AG04450 (cell line): ENCODE measurements at regions of chr2 and their contacts with region 1.

Region 1: DNA sequence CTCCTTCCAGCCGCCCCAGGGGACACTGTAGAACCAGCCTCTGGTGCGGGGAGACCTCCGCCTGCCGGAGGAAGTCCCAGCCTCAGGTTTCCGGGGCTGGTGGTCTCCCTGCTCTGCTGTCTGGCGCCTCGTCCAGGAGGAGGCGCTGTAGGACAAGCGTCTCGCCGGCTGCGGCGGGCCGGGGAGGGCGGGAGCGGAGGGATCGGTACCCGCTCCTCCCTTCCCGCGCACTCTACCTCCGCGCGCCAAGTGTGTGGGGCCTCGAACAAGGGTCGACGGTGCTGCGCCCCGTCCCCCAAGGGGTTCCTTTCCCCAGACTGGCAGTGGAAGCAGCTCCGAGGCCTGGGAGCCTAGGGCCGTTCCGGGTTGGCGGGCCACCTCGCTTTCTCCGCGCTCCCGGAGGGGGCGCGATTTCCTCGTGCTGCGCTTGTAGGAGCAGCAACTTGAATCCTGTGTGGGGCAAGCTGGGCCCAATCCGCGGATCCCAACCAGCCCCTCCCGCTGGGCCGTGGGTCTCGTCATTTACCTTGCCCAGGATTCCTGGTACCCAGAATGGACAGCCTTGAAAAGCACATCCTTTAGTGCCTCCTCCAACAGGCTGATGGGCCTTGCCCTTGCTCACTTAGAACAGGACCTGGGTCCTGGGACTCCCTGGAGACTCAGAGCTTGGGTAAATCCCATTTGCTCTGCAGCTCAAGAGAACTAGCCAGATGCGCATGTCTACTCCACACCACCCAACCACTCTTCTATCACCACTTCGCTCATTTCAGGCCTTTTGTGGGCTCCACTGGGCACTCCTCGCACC is 10.6 kb upstream of the HOXD4 start:
- DNase-seq: peak; percentile 4
- H3K4me3 ChIP-seq: peak overlapping the region; percentile 58
- H3K27ac ChIP-seq: no peak overlapping the region
- H3K27me3 ChIP-seq: peaks cover 78% of the 10 kb centered on the region
- CTCF ChIP-seq: peak; percentile 73

Region 2: DNA sequence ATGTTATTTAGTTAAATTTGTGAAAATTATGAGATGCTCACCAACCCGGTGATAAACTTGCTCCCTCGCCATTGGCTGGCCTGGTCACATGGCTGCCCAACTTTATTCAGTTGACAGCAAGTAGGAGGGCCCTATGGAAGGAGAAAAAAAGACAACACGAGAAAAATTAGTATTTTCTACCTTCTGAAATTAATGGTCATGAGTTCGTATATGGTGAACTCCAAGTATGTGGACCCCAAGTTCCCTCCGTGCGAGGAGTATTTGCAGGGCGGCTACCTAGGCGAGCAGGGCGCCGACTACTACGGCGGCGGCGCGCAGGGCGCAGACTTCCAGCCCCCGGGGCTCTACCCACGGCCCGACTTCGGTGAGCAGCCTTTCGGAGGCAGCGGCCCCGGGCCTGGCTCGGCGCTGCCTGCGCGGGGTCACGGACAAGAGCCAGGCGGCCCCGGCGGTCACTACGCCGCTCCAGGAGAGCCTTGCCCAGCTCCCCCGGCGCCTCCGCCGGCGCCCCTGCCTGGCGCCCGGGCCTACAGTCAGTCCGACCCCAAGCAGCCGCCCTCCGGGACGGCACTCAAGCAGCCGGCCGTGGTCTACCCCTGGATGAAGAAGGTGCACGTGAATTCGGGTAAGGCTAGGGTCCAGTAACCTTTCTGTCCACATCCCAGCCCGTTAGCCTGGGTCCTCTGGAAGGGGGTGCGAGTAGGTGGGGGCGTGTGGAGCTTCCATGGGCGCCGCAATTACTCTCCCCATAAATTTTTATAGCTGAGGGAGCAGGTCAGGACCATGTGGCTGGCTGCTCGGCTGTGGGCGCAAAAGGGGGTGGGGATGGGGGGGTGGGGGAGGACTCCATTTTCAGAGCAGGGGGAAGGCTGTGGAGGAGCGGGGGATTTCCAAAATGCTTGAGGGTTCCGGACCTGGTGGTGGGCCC is 11.0 kb after region 1 on chr2 and contains the start of gene HOXD4:
- CTCF ChIA-PET with region 1: interaction called, 11 read pairs
- POLR2A ChIA-PET with region 1: no interaction called
- DNase-seq: no peak
- H3K4me3 ChIP-seq: no peak within 1 kb of the TSS
- H3K27ac ChIP-seq: no peak within 1 kb of the TSS
- H3K27me3 ChIP-seq: peaks cover 94% of the 10 kb centered on the region
- CTCF ChIP-seq: no peak
- polyA plus RNA-seq, gene HOXD4: not detected in 2 replicates

Region 3: GRCh38 chr2:176445956-176446355 is 305.2 kb after region 1 on chr2:
- CTCF ChIA-PET with region 1: interaction called, 114 read pairs
- POLR2A ChIA-PET with region 1: no interaction called
- DNase-seq: peak; percentile 44
- H3K4me3 ChIP-seq: no peak overlapping the region
- H3K27ac ChIP-seq: no peak overlapping the region
- H3K27me3 ChIP-seq: no peaks in the 10 kb centered on the region
- CTCF ChIP-seq: peak; percentile 30

Region 4: DNA sequence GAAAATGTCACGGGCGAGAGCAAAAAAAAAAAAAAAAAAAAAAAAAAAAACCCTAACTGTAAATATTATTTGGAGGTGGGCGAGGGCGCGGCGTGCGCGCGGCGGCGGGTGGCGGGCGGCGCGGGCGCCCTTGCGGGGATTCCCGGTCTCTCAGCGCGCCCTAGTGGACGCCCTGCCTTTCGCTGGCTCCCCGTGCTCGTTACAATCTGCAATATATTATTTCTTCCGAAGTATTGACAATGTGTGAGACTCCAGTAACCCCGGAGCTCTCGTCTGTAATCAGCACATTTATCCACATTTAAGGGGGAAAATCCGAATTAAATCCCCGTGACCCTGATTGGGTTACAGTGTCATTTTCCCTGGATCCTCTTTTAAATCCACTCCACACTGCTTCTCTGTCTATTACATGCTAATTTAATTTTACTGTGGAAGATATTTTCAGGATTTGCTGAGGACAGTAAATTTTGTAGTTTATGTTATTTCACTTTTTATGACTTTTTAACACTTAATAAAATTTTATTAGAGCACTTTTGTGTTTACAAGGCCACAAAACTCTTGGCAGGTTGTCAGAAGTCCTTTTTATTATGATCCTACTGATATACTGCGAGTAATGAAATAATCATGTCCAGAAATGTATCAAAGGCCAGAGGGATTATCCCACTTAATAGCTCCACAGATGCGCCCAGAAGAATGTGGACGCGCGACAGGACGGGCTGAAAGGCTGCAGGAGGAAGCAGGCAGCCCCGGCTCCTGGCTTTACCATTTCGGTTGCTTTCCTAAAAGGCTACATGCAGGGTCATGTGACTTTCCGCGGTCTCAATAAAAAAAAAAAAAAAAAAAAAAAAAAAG is 497.7 kb after region 1 on chr2:
- CTCF ChIA-PET with region 1: interaction called, 89 read pairs
- POLR2A ChIA-PET with region 1: no interaction called
- DNase-seq: peak; percentile 6
- H3K4me3 ChIP-seq: peak overlapping the region; percentile 63
- H3K27ac ChIP-seq: no peak overlapping the region
- H3K27me3 ChIP-seq: peaks cover 4% of the 10 kb centered on the region
- CTCF ChIP-seq: peak; percentile 69

Region 5: DNA sequence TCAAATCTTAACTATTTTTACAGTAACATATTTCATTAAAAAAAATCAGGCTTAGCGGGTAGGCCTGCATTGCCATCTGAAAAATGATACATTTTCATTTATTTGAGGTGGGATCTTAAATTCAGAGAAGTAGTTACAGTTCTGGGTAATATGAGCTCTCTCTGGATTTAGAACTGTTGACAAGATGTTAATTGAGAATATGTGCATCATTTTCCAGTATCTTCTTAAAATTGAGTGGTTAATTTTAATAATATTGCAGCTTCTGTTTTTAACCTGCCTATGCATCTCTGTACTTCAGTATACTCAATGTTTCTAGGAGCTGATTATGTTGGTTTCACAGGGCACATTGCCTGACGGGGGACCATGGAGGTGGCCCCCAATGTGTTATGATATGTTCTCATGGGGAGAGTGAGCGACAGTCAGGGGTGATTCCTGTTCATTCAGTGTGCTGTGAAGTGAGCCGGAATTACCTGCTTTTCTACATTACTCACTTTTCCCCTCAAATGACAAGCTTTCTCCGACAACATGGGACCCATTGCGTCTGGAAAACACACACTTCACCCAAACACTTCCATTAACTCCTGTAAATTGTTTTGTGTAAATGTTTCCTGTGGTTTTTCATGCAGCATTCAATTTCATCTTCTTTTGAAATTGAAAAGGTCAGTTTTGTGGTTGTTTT is 534.7 kb after region 1 on chr2:
- CTCF ChIA-PET with region 1: interaction called, 13 read pairs
- POLR2A ChIA-PET with region 1: no interaction called
- DNase-seq: no peak
- H3K4me3 ChIP-seq: no peak overlapping the region
- H3K27ac ChIP-seq: no peak overlapping the region
- H3K27me3 ChIP-seq: peaks cover 3% of the 10 kb centered on the region
- CTCF ChIP-seq: no peak

Region 6: DNA sequence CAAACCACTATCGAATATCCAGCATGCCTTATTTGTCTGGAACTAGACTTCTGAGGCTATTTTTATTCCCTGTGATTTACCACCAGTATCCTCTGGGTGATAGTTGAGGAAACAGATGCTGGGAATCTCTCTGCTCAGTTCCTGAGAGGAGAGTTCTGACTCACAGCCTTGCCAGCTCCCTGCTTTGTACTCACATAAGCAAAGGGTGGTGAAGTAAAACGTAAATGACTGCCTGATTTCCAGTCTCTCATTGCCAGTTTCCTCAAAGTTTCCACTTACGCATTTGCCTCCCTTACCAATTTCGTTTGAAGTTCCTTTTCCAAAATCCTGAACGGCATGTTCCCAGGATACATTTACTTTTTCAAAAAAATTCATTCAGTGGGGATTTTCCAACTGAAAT is 1002.7 kb after region 1 on chr2:
- CTCF ChIA-PET with region 1: interaction called, 21 read pairs
- POLR2A ChIA-PET with region 1: no interaction called
- DNase-seq: no peak
- H3K4me3 ChIP-seq: no peak overlapping the region
- H3K27ac ChIP-seq: no peak overlapping the region
- H3K27me3 ChIP-seq: peaks cover 7% of the 10 kb centered on the region
- CTCF ChIP-seq: no peak